ENCODE measurements at regions of chr20 and their contacts with region 1.

Region 1: GRCh38 chr20:57596998-57597939 is 23.0 kb downstream of the ZBP1 start:
- DNase-seq: peak; percentile 94
- H3K4me3 ChIP-seq: peak overlapping the region in 1 of 2 experiments; percentile 18; a peak in 1 of 4 replicates
- H3K27ac ChIP-seq: no peak overlapping the region
- H3K4me1 ChIP-seq: peaks cover 0 to 9% of the 10 kb centered on the region in 2 experiments; a peak in 1 of 4 replicates
- H3K27me3 ChIP-seq: no peaks in the 10 kb centered on the region
- CTCF ChIP-seq: peak; percentile 83
- EP300 ChIP-seq: no peak
- RAD21 ChIP-seq: peak; percentile 82

Region 2: DNA sequence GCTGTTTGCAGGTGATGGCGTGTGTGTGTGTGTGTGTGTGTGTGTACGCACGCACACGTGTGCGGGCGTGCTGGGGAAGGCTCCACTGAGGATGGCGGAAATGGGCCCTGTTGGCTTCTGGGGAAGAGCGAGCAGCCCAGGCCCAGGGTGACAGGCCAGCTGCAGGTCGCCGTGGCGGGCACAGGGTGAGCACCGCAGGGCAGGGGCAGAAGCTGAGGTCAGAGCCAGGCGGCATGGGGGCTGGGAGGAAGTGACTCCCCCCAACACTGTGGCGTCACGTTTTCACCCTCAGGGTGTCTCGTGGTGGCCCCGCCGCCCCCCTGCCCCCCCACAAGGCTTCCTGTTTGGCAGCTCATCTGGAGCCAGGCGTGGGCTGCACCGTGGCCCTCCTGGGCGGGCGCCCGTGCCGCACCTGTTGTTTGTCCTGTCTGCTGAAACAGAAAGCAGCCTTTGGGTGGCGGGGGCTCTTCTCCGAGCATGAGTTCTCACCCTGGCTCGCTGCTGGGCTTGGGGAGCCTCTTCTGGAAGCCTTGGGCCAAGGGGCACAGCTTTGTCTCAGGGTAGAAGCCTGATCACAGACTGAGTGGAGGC is 198.9 kb before region 1 on chr20:
- CTCF ChIA-PET with region 1: no interaction called
- POLR2A ChIA-PET with region 1: no interaction called
- DNase-seq: no peak
- H3K4me3 ChIP-seq: no peak overlapping the region
- H3K27ac ChIP-seq: peak overlapping the region in 1 of 2 experiments; percentile 20; a peak in 1 of 4 replicates
- H3K4me1 ChIP-seq: peaks cover 0 to 19% of the 10 kb centered on the region in 2 experiments; a peak in 1 of 4 replicates
- H3K27me3 ChIP-seq: no peaks in the 10 kb centered on the region
- CTCF ChIP-seq: no peak
- EP300 ChIP-seq: no peak
- RAD21 ChIP-seq: no peak

Region 3: DNA sequence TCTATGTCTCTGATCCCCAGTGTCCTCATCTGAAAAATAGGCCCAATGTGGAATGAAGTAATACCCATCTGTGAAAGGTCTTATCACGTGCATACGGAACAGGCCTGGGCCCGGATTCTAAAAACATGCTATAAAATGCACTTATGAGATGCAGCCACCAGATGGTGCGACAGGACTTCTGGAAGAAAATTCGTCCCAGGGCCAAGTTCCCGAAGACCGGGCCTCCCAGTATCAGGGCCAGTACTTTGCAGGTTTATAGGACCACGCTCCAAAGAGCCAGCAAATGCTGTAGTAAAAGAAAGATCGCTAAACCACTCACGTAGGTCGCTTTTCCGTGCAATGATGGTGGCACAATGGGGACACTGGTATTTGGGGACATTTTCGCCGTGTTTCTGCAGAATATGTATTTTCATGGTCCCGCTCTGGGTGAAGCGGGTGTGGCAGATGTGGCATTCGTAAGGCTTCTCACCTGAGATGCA is 83.0 kb before region 1 on chr20:
- CTCF ChIA-PET with region 1: interaction called, 403 read pairs
- POLR2A ChIA-PET with region 1: interaction called, 3 read pairs
- DNase-seq: peak; percentile 77
- H3K4me3 ChIP-seq: no peak overlapping the region; a peak in 1 of 4 replicates
- H3K27ac ChIP-seq: no peak overlapping the region
- H3K4me1 ChIP-seq: peaks cover 0 to 2% of the 10 kb centered on the region in 2 experiments; a peak in 1 of 4 replicates
- H3K27me3 ChIP-seq: no peaks in the 10 kb centered on the region; the same call in 1 of the 2 replicates
- CTCF ChIP-seq: peak; percentile 72
- EP300 ChIP-seq: no peak
- RAD21 ChIP-seq: peak; percentile 94

Region 4: DNA sequence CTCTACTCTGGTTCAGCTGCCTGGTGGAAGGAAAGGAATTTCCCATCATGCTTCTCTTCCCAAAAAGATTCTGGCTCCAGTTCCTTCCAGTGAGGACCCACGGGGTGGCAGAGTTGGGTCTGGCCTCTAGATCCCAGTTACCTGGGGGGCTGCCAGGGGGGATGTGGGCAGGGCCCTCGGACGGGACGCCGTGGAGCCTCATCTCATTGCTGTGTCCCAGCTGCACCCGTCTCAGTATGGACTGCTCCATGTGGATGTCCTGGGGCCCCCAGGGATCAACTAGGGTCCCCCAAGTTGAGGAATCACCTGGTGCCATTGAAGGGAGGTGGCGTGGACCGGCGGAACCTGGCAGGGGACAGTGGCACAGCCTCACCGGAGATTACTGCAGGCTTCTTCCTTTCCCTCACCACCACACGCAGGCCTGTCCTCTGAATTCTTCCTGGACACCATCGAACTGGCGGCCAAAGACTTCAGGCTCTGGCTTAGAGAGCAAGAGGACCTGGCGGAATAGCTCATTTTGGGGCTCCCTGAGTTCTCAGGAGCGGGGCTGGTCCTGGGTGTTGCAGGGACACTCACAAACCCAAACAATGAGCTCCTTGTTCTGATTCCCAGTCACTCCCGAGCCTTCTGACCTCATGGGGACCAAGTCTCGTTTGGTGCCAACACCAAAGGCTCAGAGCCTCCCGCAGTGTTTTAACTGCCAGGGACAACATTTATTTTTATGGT is 14.5 kb after region 1 on chr20:
- CTCF ChIA-PET with region 1: interaction called, 25 read pairs
- POLR2A ChIA-PET with region 1: no interaction called
- DNase-seq: no peak
- H3K4me3 ChIP-seq: no peak overlapping the region
- H3K27ac ChIP-seq: no peak overlapping the region
- H3K4me1 ChIP-seq: no peaks in the 10 kb centered on the region
- H3K27me3 ChIP-seq: no peaks in the 10 kb centered on the region; the same call in 1 of the 2 replicates
- CTCF ChIP-seq: no peak
- EP300 ChIP-seq: no peak
- RAD21 ChIP-seq: no peak

Region 5: DNA sequence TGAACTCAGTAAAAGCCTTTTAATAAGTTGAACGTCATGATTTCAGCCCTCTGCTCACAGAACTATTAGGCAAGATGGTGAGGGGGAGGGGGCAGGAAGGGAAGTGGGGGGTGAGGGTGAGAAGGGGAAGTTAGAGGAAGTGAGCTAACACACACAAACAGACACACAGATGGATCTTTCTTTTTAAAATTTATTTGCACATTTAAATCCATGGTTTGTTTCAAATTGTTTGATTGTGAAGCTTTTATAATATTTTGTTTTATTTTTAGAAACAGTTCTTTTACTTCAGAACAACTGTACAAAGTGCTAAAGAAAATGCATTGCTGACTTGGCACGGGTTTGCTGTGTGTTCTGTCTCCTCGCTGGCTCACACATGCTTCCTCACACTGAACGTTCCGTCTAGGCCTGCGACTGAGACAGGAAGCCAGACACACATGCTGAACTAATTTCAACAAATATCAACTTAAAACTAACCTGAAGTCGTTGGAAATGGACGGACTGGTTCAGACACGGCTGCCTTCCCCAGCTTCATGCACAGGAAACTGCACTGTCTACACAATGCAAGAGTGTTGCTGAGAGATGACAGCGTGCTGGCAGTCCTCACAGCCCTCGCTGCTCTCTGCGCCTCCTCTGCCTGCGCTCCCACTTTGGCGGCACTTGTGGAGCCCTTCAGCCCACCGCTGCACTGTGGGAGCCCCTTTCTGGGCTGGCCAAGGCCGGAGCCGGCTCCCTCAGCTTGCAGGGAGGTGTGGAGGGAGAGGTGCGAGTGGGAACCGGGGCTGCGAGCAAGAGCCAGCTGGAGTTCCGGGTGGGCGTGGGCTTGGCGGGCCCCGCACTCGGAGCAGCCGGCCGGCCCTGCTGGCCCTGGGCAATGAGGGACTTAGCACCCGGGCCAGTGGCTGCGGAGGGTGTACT is 31.0 kb after region 1 on chr20:
- CTCF ChIA-PET with region 1: interaction called, 50 read pairs
- POLR2A ChIA-PET with region 1: no interaction called
- DNase-seq: no peak
- H3K4me3 ChIP-seq: no peak overlapping the region
- H3K27ac ChIP-seq: peak overlapping the region in 1 of 2 experiments; percentile 60; a peak in 1 of 4 replicates
- H3K4me1 ChIP-seq: peaks cover 0 to 9% of the 10 kb centered on the region in 2 experiments; a peak in 1 of 4 replicates
- H3K27me3 ChIP-seq: no peaks in the 10 kb centered on the region
- CTCF ChIP-seq: no peak
- EP300 ChIP-seq: no peak
- RAD21 ChIP-seq: no peak

Region 6: DNA sequence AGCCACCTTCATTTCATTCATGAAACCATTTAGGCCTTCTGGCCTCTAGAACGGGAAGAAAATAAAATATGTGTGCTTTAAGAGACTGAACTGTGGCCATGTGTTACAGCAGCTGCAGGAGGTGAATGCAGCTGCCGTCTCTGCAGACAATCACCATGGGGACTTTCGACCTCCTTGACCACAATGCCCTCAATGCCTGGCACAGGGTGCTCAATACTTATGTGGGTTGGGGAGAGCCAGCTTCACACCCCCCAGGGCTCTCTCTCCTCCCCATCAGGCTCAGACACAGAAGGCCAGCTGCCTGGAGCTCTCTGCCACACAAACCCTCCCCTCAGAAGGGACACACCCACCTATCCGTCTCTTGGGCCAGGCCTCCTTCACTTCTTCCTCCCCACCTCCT is 587.7 kb after region 1 on chr20:
- CTCF ChIA-PET with region 1: interaction called, 14 read pairs
- POLR2A ChIA-PET with region 1: no interaction called
- DNase-seq: no peak
- H3K4me3 ChIP-seq: no peak overlapping the region
- H3K27ac ChIP-seq: no peak overlapping the region
- H3K4me1 ChIP-seq: no peaks in the 10 kb centered on the region
- H3K27me3 ChIP-seq: no peaks in the 10 kb centered on the region
- CTCF ChIP-seq: no peak
- EP300 ChIP-seq: no peak
- RAD21 ChIP-seq: no peak

Region 7: GRCh38 chr20:58650776-58651558 is 1053.7 kb after region 1 on chr20 and contains the start of gene STX16:
- CTCF ChIA-PET with region 1: no interaction called
- POLR2A ChIA-PET with region 1: no interaction called
- DNase-seq: peak; percentile 96
- H3K4me3 ChIP-seq: peak within 1 kb of the TSS; percentile 98 to 99
- H3K27ac ChIP-seq: peak within 1 kb of the TSS; percentile 93 to 97
- H3K4me1 ChIP-seq: peaks cover 13 to 35% of the 10 kb centered on the region in 2 experiments
- H3K27me3 ChIP-seq: no peaks in the 10 kb centered on the region
- CTCF ChIP-seq: peak; percentile 68
- EP300 ChIP-seq: peak in 1 of 2 experiments; percentile 50; a peak in 2 of 4 replicates
- RAD21 ChIP-seq: no peak; the same call in 1 of the 2 replicates
- polyA plus RNA-seq, gene STX16: 63.8 and 90.9 TPM in 2 replicates

Measured in SK-N-SH (cell line).